ENCODE measurements at regions of chr9 and their contacts with region 1.

Region 1: DNA sequence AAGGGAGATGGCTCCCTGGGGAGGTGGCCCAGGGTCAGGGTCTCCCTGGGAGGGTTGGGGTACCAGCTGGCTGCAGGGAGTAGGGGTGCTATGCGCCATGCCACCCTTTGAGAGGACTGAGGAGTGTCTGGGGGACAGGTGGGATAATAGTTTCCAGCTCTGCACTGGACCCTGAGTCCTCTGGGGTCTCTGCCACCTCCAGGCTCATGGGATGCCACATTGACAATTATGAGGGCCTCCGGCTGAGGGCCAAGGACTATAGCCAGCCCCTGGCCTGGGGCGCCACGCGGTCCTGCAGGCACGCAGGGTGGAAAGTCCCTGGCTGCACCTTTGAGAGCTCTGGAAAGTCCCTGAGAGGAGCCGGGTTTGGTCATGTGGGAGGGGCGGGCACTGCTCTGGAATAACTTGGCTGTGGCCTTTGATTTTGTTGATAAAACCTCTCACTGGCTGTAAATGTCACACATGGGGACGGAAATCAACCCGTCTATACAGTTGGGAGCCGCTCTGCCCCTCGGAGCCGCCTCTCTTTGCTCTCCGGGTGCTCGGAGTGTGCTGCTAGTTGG is 16.0 kb downstream of the TRAF2 start:
- DNase-seq: peak; percentile 88
- H3K4me3 Mint-ChIP-seq: peak overlapping the region; percentile 58
- H3K27ac Mint-ChIP-seq: peak overlapping the region; percentile 95
- H3K4me1 Mint-ChIP-seq: peaks cover 21% of the 10 kb centered on the region
- H3K27me3 Mint-ChIP-seq: no peaks in the 10 kb centered on the region
- CTCF ChIP-seq: no peak

Region 2: DNA sequence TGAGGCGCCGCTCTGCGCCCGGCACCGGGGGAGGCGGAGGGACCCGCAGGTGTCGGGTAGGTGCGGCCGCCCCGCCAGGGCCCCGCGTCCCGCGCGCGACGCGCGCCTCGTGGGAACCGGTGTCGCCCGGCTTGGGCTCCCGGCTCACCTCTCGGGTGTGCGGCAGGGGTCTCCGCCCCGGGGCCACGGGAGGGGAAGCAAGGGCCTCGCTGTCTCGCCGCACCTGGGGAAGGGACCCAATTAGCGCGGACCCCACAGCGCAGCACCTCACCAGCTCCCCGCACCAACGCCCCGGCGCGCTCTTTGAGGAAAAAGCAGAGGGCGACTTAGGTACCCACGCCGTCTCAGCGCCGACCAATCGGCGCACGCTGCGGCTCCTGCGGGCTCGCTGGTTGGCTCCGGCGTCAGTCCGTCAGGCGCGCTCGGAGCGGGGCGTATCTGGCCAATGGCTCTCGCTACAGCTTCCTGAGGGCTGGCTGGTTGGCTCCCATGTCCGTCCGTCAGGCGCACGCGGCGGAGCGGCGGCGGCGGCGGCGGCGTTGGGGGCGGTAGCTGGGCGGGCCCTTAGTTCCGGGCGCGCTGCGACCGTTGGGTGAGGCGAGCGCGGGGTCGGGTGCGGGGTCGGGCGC is 16.3 kb before region 1 on chr9 and contains the start of gene TRAF2:
- CTCF ChIA-PET with region 1: interaction called, 12 read pairs
- intact Hi-C with region 1: loop called (anchors 2 kb)
- DNase-seq: peak; percentile 96
- H3K4me3 Mint-ChIP-seq: peak within 1 kb of the TSS; percentile 86
- H3K27ac Mint-ChIP-seq: peak within 1 kb of the TSS; percentile 66
- H3K4me1 Mint-ChIP-seq: no peaks in the 10 kb centered on the region
- H3K27me3 Mint-ChIP-seq: no peaks in the 10 kb centered on the region
- CTCF ChIP-seq: no peak
- total RNA-seq, gene TRAF2: 47.8 and 50.5 TPM in 2 replicates